MCF 10A (cell line): ENCODE measurements at regions of chr11 and their contacts with region 1.

Region 1: DNA sequence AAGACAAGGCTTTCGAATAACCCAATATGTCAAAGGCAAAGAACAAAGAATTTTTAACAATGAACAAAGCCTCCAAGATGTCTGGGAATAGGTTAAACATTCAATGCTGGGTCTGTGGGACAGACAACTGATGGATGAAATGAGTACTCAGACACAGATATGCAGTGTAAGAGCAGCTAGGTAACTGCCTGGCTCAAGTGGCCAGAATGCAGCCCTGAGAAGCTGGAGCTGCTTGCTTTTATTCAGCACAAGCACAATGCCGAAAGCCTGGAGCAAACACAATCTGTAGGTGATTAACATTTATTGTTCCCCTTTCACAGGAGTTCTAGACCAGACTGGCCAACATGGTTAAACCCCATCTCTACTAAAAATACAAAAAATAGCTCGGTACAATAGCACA is 24.0 kb downstream of the GLYAT start:
- DNase-seq: no peak
- H3K4me3 Mint-ChIP-seq: no peak overlapping the region
- H3K27ac Mint-ChIP-seq: no peak overlapping the region
- H3K4me1 Mint-ChIP-seq: no peaks in the 10 kb centered on the region
- H3K27me3 Mint-ChIP-seq: no peaks in the 10 kb centered on the region
- CTCF ChIP-seq: no peak

Region 2: GRCh38 chr11:57741132-57742086 is 966.4 kb before region 1 on chr11 and contains the start of gene SELENOH:
- CTCF ChIA-PET with region 1: no interaction called
- POLR2A ChIA-PET with region 1: no interaction called
- intact Hi-C with region 1: no loop called
- DNase-seq: peak; percentile 90
- H3K4me3 Mint-ChIP-seq: peak within 1 kb of the TSS; percentile 89
- H3K27ac Mint-ChIP-seq: peak within 1 kb of the TSS; percentile 99
- H3K4me1 Mint-ChIP-seq: no peaks in the 10 kb centered on the region
- H3K27me3 Mint-ChIP-seq: no peaks in the 10 kb centered on the region
- CTCF ChIP-seq: no peak
- total RNA-seq, gene SELENOH: 60.3 and 84.5 TPM in 2 replicates

Region 3: DNA sequence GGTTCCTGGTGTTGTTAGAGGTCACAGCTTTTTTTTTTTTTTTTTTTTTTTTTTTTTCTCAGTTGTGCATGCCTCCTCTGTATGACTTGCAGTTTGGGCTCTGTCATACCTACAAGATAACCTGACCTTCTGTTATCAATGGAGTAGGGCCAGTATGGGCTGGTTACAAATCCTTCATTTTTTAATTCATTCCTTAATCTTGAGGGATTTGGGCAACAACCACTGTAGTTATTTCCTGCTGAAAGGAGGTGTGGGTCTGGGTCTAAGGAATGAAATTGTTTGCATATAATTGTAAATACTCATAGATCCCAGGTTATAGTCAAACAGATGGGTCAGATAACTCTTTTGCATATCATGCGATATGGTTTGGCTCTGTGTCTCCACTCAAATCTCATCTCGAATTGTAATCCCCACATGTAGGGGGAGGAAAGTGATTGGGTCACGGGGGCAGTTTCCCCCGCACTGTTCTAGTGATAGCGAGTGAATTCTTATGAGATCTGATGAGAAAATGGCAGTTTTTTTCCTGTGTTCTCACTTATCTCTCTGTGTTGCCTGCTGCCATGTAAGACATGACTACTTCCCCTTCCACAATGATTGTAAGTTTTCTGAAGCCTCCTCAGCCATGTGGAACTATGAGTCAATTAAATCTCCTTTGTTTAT is 38.1 kb after region 1 on chr11:
- CTCF ChIA-PET with region 1: no interaction called
- POLR2A ChIA-PET with region 1: no interaction called
- intact Hi-C with region 1: loop called (anchors 5 kb)
- DNase-seq: no peak
- H3K4me3 Mint-ChIP-seq: no peak overlapping the region
- H3K27ac Mint-ChIP-seq: no peak overlapping the region
- H3K4me1 Mint-ChIP-seq: no peaks in the 10 kb centered on the region
- H3K27me3 Mint-ChIP-seq: no peaks in the 10 kb centered on the region
- CTCF ChIP-seq: no peak